Cardiac septum (tissue), 1 donor: ENCODE measurements at regions of chr17 and their contacts with region 1.

Region 1: GRCh38 chr17:48259694-48260291 is 152.2 kb downstream of the SNX11 start:
- DNase-seq: no peak

Region 2: GRCh38 chr17:48307814-48308411 is 48.1 kb after region 1 on chr17:
- intact Hi-C with region 1: loop called (anchors 5 kb)
- DNase-seq: no peak

Region 3: GRCh38 chr17:48624544-48625494 is 365.0 kb after region 1 on chr17:
- intact Hi-C with region 1: loop called (anchors 5 kb)
- DNase-seq: no peak